ENCODE measurements at regions of chr18 and their contacts with region 1.

Region 1: DNA sequence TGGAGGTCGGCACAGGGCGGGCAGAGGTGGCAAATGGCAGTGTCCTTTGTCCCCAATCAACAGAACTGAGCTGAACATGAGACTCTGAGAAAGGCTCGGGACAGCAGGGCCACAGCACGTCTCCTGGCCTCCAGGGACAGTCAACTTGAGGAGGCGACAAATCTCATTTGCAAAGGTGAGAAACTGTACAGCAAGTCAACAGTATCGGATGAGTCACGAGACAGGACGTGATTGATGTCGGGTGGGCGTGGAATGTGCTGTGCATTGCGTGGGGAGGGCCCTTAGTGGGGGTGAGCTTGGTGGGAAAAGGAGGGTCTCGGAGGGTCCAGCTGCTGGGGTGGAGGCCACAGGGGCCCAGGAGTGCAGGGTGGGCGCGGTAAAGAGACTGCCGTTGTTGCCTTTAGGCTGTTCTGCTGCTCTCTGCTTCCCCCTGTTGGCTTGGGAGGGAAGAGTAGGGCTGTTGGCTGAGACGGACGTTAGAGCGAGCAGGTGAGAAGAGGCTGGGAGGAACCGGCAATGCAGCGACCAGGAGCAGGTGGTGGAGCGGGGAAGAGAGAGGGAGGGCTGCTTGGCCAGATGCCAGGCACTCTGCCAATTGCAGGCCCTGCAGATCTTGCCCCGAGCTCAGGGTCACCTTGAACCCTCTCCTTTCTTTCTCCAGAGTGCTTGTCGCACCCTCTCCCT is 164.3 kb downstream of the BCL2 start:
- DNase-seq: peak; percentile 95
- H3K4me3 Mint-ChIP-seq: peak overlapping the region; percentile 83
- H3K27ac Mint-ChIP-seq: peak overlapping the region; percentile 98
- H3K4me1 Mint-ChIP-seq: peaks cover 91% of the 10 kb centered on the region
- H3K27me3 Mint-ChIP-seq: no peaks in the 10 kb centered on the region

Region 2: GRCh38 chr18:63004466-63005089 is 150.7 kb before region 1 on chr18:
- intact Hi-C with region 1: no loop called
- DNase-seq: no peak
- H3K4me3 Mint-ChIP-seq: no peak overlapping the region
- H3K27ac Mint-ChIP-seq: no peak overlapping the region
- H3K4me1 Mint-ChIP-seq: no peaks in the 10 kb centered on the region
- H3K27me3 Mint-ChIP-seq: peaks cover 8% of the 10 kb centered on the region

Region 3: DNA sequence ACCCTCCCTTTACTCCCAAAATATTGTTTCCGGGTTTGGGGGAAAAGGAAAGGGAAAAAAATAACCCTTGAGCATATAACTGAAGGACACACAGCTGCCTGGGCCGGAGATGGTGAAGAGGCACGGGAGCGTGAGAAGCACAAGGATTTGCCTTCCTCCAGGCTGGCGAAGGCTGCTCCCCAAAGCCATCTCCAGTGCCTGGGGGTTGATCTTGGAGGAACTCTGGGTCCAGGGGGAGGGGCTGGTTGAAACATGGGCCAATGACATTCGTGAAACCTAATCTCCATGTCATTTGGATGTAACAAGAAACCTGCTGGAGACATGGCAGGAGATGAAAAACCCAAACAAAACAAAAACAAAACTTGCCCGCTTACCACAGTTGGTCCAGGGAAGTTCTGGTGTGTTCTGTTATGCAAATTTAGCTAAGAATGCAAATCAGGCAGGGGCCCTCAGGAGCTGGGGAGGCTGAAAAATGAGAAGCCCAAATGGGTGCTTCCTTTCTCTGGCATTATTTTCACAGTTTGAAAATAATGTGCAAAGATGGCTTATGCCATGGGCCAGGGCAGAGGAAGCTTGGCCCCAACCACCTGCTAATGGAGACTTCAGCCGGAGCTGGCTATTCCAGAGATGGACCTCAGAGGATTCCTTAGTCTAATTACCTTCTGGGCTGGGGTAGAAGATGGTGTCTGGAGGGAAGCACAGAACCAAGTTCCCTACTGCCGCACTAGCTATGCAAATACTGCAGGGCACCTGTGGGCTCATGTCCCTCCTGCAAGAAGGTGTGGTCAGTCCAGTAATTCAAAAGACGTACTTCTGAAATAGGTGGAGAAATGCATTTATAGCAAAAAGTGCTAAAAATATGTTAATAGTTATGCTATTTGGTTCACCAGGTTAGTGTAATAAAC is 16.6 kb before region 1 on chr18:
- intact Hi-C with region 1: loop called (anchors 1 kb)
- DNase-seq: no peak
- H3K4me3 Mint-ChIP-seq: peak overlapping the region; percentile 82
- H3K27ac Mint-ChIP-seq: peak overlapping the region; percentile 90
- H3K4me1 Mint-ChIP-seq: peaks cover 58% of the 10 kb centered on the region
- H3K27me3 Mint-ChIP-seq: no peaks in the 10 kb centered on the region

Region 4: DNA sequence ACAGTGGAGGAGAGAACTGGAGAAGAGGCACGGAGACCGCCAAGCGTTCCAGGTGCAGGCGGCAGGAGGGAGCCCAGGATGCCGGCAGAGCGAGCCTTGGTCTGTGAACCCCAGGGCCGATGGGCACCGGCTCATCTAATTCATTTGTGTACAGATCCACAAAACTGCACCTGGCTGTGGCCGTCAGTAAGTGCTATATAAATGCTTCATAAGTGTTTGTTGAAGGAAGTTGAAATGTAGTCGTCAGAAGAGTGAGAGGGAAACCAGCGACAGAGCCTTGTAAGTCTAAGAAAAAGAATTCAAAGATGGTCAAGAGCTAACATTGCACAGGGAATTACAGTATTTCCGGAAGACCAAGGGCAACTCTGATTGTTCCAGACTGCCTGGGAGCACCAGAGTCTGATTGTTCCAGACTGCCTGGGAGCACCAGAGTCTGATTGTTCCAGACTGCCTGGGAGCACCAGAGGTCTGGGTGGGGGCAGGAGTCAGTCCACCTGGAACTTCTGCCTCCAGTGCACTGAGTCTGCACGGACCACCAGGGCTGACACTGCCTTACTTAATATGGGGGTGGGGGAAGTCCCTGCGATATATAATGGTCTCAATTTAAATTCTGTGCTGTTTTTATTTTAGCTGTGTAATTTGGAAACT is 52.0 kb after region 1 on chr18:
- intact Hi-C with region 1: no loop called
- DNase-seq: peak; percentile 75
- H3K4me3 Mint-ChIP-seq: peak overlapping the region; percentile 89
- H3K27ac Mint-ChIP-seq: peak overlapping the region; percentile 93
- H3K4me1 Mint-ChIP-seq: peaks cover 80% of the 10 kb centered on the region
- H3K27me3 Mint-ChIP-seq: no peaks in the 10 kb centered on the region

Region 5: DNA sequence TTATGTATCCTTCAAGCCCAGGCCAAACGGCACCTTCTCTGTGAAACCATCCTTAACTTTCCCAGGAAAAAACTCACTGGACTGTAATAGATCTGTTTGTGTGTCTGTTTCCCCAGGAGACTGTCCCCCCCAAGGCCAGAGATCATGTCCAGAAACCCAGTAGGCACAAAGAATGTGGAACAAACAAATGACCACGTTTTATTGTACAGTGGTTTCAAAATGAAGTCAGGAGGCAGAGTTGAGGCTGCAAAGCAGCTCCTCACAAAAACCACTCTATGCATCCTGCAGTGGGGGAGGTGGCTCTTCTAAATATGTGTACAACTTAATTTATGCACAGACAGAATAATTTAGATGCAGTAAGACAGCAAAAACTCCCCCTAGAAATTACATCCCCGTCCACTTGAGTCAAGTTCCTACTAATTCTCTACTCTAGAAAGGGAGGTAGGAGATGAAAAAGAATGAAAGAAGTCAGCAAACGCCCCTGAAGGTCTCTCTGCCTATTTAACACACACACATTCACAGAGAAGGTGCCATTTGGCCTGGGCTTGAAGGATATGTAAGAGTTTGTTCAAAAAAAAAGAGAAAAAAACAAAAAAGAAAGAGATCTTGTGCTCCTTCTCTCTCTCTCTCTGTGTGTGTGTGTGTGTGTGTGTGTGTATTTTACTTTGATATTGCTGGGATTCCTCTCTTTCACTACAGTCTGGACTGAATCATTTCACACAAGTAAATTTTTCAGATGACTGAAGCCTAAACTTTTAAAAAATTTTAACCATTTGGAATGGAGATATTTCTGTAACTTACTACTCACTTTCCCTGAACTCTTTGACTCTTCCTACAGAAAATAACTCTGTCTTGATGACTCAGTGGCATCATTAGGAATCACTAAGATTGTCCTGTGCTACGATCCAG is 144.8 kb after region 1 on chr18:
- intact Hi-C with region 1: loop called (anchors 1 kb)
- DNase-seq: peak; percentile 81
- H3K4me3 Mint-ChIP-seq: peak overlapping the region; percentile 81
- H3K27ac Mint-ChIP-seq: peak overlapping the region; percentile 98
- H3K4me1 Mint-ChIP-seq: peaks cover 81% of the 10 kb centered on the region
- H3K27me3 Mint-ChIP-seq: no peaks in the 10 kb centered on the region

Region 6: GRCh38 chr18:63367053-63367953 is 212.0 kb after region 1 on chr18 and contains the start of gene KDSR:
- intact Hi-C with region 1: loop called (anchors 2 kb)
- DNase-seq: peak; percentile 96
- H3K4me3 Mint-ChIP-seq: peak within 1 kb of the TSS; percentile 91
- H3K27ac Mint-ChIP-seq: peak within 1 kb of the TSS; percentile 81
- H3K4me1 Mint-ChIP-seq: peaks cover 29% of the 10 kb centered on the region
- H3K27me3 Mint-ChIP-seq: no peaks in the 10 kb centered on the region
- total RNA-seq, gene KDSR: 83.9 and 86.9 TPM in 2 replicates

Measured in activated CD4-positive, alpha-beta T cell treated with anti-CD3 and anti-CD28 coated beads, Interleukin-2, amount 10 ng/mL, durations not matched to agents 24 days and 14 days (primary cell).